Common myeloid progenitor, CD34-positive (primary cell): ENCODE measurements at regions of chr19 and their contacts with region 1.

Region 1: DNA sequence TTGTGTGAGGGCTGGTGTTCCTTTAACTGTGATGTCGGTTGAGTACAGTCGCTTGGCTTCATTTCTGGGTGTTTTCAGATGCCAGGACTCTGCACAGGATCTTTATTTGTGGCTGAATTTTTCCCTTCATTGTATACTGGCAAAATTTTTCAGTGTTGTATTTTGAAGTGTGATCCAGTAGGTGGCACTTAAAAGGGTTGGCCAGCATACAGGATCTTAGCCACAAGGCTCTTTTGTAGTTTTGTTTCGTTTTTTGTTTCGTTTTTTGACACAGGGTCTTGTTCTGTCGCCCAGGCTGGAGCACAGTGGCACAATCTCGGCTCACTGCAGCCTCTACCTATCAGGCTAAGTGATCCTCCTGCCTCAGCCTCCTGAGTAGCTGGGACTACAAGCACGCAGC is 8.7 kb downstream of the FCAR start:
- DNase-seq: peak; percentile 63 to 82 (median 78)
- H3K4me3 ChIP-seq: peak overlapping the region in 1 of 7 experiments; percentile 35
- H3K27ac ChIP-seq: no peak overlapping the region
- H3K4me1 ChIP-seq: peaks cover 0 to 7% (median 4%) of the 10 kb centered on the region in 4 experiments
- H3K27me3 ChIP-seq: peaks cover 0 to 10% (median 4%) of the 10 kb centered on the region in 5 experiments

Region 2: DNA sequence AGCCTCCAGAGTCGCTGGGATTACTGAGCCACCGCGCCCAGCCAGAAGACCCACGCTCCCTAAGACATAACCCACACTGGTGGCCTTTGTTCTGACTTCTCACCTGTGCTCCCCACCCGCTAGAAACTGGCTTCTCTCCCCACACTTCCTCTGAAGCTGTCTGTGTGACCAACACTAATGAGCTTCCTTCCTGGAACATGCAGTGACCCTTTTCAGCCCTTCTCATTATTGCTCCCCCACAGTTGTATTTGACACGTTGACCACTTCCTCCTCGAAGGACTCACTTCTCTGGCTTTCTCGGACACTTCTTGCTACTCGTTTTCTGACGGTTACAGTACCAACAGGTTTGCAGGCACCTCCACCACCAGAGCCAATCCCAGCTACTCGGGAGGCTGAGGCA is 34.1 kb after region 1 on chr19:
- CTCF ChIA-PET with region 1: interaction called, 28 read pairs
- POLR2A ChIA-PET with region 1: no interaction called
- DNase-seq: no peak
- H3K4me3 ChIP-seq: no peak overlapping the region
- H3K27ac ChIP-seq: no peak overlapping the region
- H3K4me1 ChIP-seq: peaks cover 0 to 15% (median 3%) of the 10 kb centered on the region in 4 experiments
- H3K27me3 ChIP-seq: peaks cover 0 to 3% (median 0%) of the 10 kb centered on the region in 5 experiments

Region 3: DNA sequence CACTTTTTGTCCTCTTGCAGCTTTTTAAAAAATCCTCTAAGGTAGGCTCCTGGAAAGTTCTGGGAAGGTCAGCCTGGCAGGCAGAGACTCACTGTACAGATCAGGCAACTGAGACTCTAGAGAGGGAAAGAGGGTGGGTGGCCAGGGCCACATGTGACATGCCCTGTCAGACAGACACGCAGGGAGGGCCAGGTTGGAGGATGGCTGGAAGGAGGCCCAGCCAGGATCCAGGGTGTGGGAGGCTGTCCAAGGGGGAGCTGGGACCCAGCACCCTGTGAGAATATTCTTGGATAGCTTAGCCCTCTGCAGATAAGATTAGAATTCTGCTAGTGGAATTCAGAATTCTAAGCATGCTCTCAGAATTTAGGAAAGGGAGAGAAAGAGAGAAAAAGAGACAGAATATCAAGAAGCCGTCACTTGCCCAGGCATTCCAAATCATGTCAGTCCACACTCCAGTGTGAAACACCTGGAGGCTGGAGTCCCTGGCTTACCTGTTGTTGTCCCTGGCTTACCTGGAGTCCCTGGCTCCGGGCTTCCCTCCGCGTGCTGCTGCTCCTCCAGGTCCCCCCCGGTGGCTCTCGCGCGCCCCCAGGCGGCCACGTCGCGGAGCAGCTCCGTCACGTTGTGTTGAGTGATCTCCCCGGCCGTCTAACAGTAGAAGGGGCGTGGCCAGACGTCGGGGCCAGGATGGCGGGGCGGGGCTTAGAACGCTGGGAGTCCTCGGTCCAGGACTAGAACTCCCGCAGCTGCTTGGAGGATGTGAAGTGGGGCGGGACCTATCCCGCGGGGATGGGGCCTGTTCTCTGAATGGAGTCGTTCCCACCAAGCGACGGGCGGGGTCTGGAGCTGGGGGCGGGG is 277.6 kb after region 1 on chr19:
- CTCF ChIA-PET with region 1: interaction called, 14 read pairs
- POLR2A ChIA-PET with region 1: no interaction called
- DNase-seq: peak; percentile 88 to 92 (median 90)
- H3K4me3 ChIP-seq: peak overlapping the region in 1 of 7 experiments; percentile 4
- H3K27ac ChIP-seq: no peak overlapping the region
- H3K4me1 ChIP-seq: peaks cover 0 to 27% (median 14%) of the 10 kb centered on the region in 4 experiments
- H3K27me3 ChIP-seq: peaks cover 2 to 53% (median 12%) of the 10 kb centered on the region in 5 experiments